ENCODE measurements at regions of chr3 and their contacts with region 1.

Region 1: GRCh38 chr3:51670823-51671733 is at the start of gene TEX264:
- DNase-seq: peak; percentile 20
- H3K4me3 ChIP-seq: peak within 1 kb of the TSS; percentile 90
- H3K27me3 ChIP-seq: no peaks in the 10 kb centered on the region
- CTCF ChIP-seq: no peak
- polyA plus RNA-seq, gene TEX264: 72.5 and 100.0 TPM in 2 replicates

Region 2: GRCh38 chr3:51605938-51606337 is 65.1 kb before region 1 on chr3:
- CTCF ChIA-PET with region 1: no interaction called
- POLR2A ChIA-PET with region 1: no interaction called
- DNase-seq: no peak
- H3K4me3 ChIP-seq: no peak overlapping the region
- H3K27me3 ChIP-seq: no peaks in the 10 kb centered on the region
- CTCF ChIP-seq: no peak

Region 3: GRCh38 chr3:51637941-51638471 is 33.1 kb before region 1 on chr3:
- CTCF ChIA-PET with region 1: interaction called, 11 read pairs
- POLR2A ChIA-PET with region 1: no interaction called
- DNase-seq: no peak
- H3K4me3 ChIP-seq: no peak overlapping the region
- H3K27me3 ChIP-seq: no peaks in the 10 kb centered on the region
- CTCF ChIP-seq: peak; percentile 90

Region 4: DNA sequence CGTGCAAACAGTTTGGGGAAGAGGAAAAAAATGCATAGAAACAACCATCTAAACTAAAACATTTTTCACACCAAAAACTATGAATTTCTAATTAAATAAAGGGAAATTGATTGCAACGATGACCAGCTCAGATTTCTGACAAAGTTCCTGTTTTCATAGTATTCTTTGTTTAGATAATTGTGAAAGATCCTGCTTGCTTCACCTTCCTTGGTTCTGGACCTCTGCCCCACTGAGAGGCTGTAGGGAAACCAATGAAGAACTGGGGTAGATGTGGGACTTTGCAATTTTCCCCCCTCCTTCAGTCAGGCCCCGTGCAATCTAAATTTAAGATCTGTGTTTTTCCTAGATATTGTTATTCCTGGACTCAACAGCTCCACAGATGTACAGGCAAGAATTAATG is 13.8 kb before region 1 on chr3:
- CTCF ChIA-PET with region 1: interaction called, 26 read pairs
- POLR2A ChIA-PET with region 1: no interaction called
- DNase-seq: no peak
- H3K4me3 ChIP-seq: no peak overlapping the region
- H3K27me3 ChIP-seq: no peaks in the 10 kb centered on the region
- CTCF ChIP-seq: no peak

Region 5: DNA sequence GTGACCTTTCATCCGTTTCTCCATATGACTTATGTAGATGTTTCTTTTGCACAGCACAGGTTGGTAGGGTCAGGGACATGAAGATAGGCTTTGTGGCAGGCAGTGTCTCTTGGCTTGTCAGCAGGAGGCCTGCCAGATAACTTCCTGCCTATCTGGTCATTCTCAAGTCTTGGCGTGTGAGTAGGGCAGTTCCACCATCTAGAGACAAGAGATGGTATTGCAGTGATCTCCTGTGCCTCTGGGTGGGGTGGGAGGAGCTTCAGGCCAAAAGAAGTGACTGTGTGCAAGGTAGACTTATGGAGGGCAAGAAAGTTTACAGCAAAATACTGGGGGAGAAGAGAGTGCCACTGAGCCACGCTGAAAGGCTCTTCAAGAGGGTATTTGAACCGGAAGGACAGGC is 11.0 kb after region 1 on chr3:
- CTCF ChIA-PET with region 1: interaction called, 30 read pairs
- POLR2A ChIA-PET with region 1: no interaction called
- DNase-seq: peak; percentile 52
- H3K4me3 ChIP-seq: no peak overlapping the region
- H3K27me3 ChIP-seq: no peaks in the 10 kb centered on the region
- CTCF ChIP-seq: peak; percentile 83

Measured in BJ (cell line).